H1 (cell line): ENCODE measurements at regions of chr22 and their contacts with region 1.

Region 1: GRCh38 chr22:38097557-38098409 is 12.7 kb downstream of the BAIAP2L2 start:
- DNase-seq: peak in 1 of 2 experiments; percentile 91
- H3K4me3 ChIP-seq: peak overlapping the region; percentile 32 to 60 (median 42)
- H3K27ac ChIP-seq: no peak overlapping the region
- H3K4me1 ChIP-seq: peaks cover 0 to 6% (median 4%) of the 10 kb centered on the region in 4 experiments; a peak in 5 of 7 replicates
- H3K27me3 ChIP-seq: no peaks in the 10 kb centered on the region
- CTCF ChIP-seq: peak; percentile 84 to 86 (median 85)
- EP300 ChIP-seq: no peak
- POLR2A ChIP-seq: no peak; a peak in 1 of 3 replicates
- RAD21 ChIP-seq: peak; percentile 65 to 74

Region 2: GRCh38 chr22:38143036-38143697 is 45.4 kb after region 1 on chr22:
- CTCF ChIA-PET with region 1: interaction called, 34 read pairs
- POLR2A ChIA-PET with region 1: interaction called, 3 read pairs
- DNase-seq: no peak
- H3K4me3 ChIP-seq: no peak overlapping the region
- H3K27ac ChIP-seq: no peak overlapping the region
- H3K4me1 ChIP-seq: peaks cover 0 to 3% (median 0%) of the 10 kb centered on the region in 4 experiments; a peak in 3 of 7 replicates
- H3K27me3 ChIP-seq: no peaks in the 10 kb centered on the region
- CTCF ChIP-seq: no peak
- EP300 ChIP-seq: no peak
- POLR2A ChIP-seq: no peak
- RAD21 ChIP-seq: no peak

Region 3: DNA sequence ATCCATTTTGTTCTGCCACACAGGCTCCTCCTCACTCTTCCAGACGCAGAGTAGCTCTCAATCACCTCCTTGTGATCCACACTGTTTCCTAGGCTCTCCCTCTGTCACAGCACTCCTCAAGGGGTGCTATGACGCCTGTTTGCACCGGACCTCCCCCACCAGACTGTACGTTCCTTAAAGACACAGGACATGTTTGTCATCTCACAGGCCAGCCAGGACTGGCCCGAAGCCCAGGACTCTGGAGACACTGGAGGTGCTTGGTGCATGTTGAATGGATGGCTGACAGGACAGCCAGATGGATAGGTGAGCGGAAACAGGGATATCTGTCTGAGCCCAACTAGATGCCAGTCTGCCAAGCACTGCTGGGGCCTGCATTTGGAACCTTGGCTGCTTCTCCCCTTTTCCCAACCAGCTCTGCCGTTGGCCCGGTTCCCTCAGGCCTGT is 70.2 kb after region 1 on chr22:
- CTCF ChIA-PET with region 1: interaction called, 13 read pairs
- POLR2A ChIA-PET with region 1: no interaction called
- DNase-seq: no peak
- H3K4me3 ChIP-seq: no peak overlapping the region
- H3K27ac ChIP-seq: no peak overlapping the region
- H3K4me1 ChIP-seq: peaks cover 0 to 4% (median 1%) of the 10 kb centered on the region in 4 experiments; a peak in 3 of 7 replicates
- H3K27me3 ChIP-seq: no peaks in the 10 kb centered on the region
- CTCF ChIP-seq: no peak
- EP300 ChIP-seq: no peak
- POLR2A ChIP-seq: no peak
- RAD21 ChIP-seq: no peak

Region 4: DNA sequence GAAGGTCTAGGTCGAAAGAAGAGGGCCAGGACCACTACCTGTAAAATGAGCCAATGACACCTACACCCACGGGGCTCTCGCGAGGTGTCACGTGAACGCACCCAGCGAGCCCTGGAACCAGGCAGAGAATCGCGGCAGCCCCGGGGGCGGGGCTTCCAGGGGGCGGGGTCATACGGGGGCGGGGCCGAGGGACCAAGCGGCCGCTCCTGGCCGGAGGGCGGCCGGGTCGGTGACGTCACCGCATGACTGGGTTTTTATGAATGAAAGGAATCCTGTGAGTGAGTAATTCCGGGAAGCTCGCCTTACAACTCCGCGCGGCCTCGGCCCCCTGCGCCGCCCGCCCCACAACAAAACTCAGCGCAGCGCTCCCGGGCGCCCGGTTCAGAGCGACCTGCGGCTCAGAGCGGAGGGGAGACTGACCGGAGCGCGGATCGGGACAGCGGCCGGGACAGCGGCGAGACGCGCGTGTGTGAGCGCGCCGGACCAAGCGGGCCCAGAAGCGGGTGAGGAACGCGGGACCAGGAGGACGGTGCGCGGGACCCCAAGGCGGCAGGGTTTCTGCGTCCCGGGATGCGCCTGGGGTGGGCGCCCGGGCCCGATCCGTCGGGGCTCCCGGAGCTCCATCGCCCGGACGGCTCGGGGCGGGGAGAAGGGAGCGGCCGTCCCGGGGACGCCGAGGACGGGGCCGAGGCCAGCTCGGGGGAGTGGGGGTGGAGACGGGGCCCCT is 104.1 kb after region 1 on chr22 and contains the start of gene MAFF:
- CTCF ChIA-PET with region 1: interaction called, 4 read pairs
- POLR2A ChIA-PET with region 1: interaction called, 10 read pairs
- DNase-seq: peak; percentile 77 to 93
- H3K4me3 ChIP-seq: peak within 1 kb of the TSS; percentile 64 to 82 (median 71)
- H3K27ac ChIP-seq: peak within 1 kb of the TSS; percentile 75; the same call in 1 of the 2 replicates
- H3K4me1 ChIP-seq: peaks cover 0 to 10% (median 6%) of the 10 kb centered on the region in 4 experiments; a peak in 6 of 7 replicates
- H3K27me3 ChIP-seq: peaks cover 0 to 14% (median 11%) of the 10 kb centered on the region in 4 experiments; a peak in 5 of 7 replicates
- CTCF ChIP-seq: no peak
- EP300 ChIP-seq: no peak
- POLR2A ChIP-seq: peak in 1 of 2 experiments; percentile 78; a peak in 2 of 3 replicates
- RAD21 ChIP-seq: no peak
- total RNA-seq, gene MAFF: 6.2 and 6.3 TPM in 2 replicates